Activated CD4-positive, alpha-beta memory T cell treated with anti-CD3 and anti-CD28 coated beads for 36 hours (primary cell): ENCODE measurements at regions of chr7 and their contacts with region 1.

Region 1: DNA sequence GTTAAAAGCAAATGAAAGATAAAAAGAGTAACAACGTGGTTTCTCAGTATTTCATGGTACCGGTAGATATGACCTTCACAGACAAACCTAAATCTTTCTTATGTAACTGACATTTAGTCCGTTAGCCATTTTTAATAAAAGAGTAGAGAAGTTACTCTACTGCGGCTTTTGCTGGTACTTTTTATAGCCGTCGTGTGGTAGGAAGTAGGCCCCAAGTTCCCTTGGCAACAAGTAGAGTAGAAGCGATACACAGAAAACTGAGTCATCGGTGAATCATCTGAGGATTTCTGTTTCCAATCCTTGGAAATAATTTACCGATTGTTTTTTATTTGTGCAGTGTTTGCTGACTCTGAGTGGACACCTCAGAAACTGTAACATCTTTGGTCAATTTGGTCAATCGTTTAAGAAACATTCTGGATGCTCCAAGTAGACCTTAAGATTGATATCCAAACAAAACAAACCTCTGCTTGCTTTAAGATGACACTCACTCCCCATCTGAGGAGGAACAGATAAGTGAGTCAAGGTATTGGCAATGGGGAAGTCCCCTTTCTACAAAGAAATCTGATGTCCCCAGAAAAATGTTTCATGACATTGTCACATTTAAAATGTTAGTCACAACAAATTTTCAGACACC is 63.9 kb upstream of the AHR start:
- DNase-seq: peak; percentile 83
- H3K4me3 Mint-ChIP-seq: peak overlapping the region; percentile 71
- H3K27ac Mint-ChIP-seq: peak overlapping the region; percentile 89
- H3K4me1 Mint-ChIP-seq: peaks cover 48% of the 10 kb centered on the region
- H3K27me3 Mint-ChIP-seq: no peaks in the 10 kb centered on the region

Region 2: DNA sequence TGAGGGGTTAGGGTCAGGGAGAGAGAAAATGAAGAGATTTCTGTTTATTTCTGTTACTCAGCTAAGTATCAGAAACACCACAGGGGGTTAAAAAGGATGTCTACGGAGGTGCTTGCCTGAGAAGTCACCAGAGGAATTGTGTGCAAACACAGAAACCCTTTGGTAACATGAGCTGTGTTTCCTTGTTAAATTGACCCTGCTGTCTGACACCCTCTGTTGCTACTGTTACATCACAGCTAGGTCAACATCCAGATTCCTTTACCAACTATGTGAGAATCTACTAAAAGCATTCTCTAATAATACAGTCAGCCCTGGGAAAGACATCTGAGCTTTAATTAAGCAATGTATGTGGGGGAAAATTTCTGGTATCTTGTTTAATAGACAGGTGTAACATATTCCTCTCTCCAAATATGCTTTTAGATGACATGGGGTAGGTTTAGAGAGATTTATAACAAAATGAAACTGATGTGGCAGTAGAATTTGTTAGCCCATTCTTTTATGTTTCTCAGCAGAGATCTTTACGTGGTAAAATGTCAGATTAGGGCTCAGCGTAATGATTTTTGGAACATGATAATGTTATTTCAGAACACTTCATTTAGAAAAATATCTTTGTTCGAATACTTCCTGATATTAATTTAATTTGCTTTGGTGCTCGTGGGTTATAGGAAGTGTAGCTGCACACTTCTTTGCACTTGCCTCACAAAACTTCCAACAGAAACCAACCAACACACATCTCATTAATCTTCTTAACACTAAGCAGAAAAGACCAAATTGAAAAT is 104.0 kb before region 1 on chr7:
- CTCF ChIA-PET with region 1: no interaction called
- POLR2A ChIA-PET with region 1: no interaction called
- intact Hi-C with region 1: loop called (anchors 1 kb)
- DNase-seq: no peak
- H3K4me3 Mint-ChIP-seq: no peak overlapping the region
- H3K27ac Mint-ChIP-seq: no peak overlapping the region
- H3K4me1 Mint-ChIP-seq: peaks cover 38% of the 10 kb centered on the region
- H3K27me3 Mint-ChIP-seq: peaks cover 2% of the 10 kb centered on the region

Region 3: GRCh38 chr7:17144322-17144721 is 90.2 kb before region 1 on chr7:
- CTCF ChIA-PET with region 1: no interaction called
- POLR2A ChIA-PET with region 1: interaction called, 3 read pairs
- intact Hi-C with region 1: loop called (anchors 1 kb)
- DNase-seq: peak; percentile 83
- H3K4me3 Mint-ChIP-seq: peak overlapping the region; percentile 43
- H3K27ac Mint-ChIP-seq: peak overlapping the region; percentile 53
- H3K4me1 Mint-ChIP-seq: peaks cover 46% of the 10 kb centered on the region
- H3K27me3 Mint-ChIP-seq: peaks cover 2% of the 10 kb centered on the region

Region 4: DNA sequence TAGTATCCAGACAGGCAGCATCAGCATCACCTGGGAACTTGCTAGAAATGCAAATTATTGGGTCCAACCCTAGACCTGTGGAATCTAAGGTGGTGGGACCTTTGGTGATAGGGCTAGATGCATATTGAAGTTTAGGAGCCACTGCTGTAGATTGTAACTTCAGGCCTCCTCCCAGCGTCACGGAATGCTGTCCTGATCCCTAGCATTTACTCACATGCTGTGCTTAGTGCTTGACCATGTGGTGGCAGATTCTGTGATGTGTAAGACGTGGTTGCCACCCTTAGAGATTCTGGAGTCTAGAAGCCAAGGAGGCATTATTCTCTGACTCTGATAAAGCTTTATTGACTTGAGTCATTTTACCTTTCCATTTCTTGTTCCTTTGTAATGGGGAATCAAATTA is 77.4 kb after region 1 on chr7:
- CTCF ChIA-PET with region 1: no interaction called
- POLR2A ChIA-PET with region 1: no interaction called
- intact Hi-C with region 1: no loop called
- DNase-seq: no peak
- H3K4me3 Mint-ChIP-seq: no peak overlapping the region
- H3K27ac Mint-ChIP-seq: no peak overlapping the region
- H3K4me1 Mint-ChIP-seq: peaks cover 12% of the 10 kb centered on the region
- H3K27me3 Mint-ChIP-seq: no peaks in the 10 kb centered on the region

Region 5: GRCh38 chr7:17492437-17492836 is 257.9 kb after region 1 on chr7:
- CTCF ChIA-PET with region 1: no interaction called
- POLR2A ChIA-PET with region 1: no interaction called
- intact Hi-C with region 1: loop called (anchors 1 kb)
- DNase-seq: no peak
- H3K4me3 Mint-ChIP-seq: no peak overlapping the region
- H3K27ac Mint-ChIP-seq: no peak overlapping the region
- H3K4me1 Mint-ChIP-seq: peaks cover 11% of the 10 kb centered on the region
- H3K27me3 Mint-ChIP-seq: no peaks in the 10 kb centered on the region